Activated CD4-positive, alpha-beta memory T cell treated with anti-CD3 and anti-CD28 coated beads for 36 hours (primary cell): ENCODE measurements at regions of chr5 and their contacts with region 1.

Region 1: DNA sequence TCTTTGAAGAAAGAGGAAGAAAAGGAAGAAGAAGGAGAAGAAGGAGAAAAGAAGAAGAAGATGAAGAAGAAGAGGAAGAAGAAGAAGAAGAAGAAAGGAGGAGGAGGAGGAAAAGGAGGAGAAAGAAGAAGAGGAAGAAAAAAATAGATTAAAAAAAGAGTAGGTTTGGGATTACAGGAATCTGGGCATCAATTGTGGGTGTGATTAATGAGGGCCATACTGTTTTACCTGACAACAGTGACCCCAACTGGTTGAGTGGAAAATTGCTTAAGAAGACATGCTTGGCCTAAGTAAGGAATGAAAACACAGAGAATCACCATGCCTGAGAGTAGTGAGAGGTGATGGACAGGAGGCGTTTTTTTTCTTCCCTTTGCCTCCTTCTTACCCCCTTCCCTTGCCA is 114.6 kb downstream of the FAM170A start:
- DNase-seq: no peak
- H3K4me3 Mint-ChIP-seq: no peak overlapping the region
- H3K27ac Mint-ChIP-seq: no peak overlapping the region
- H3K4me1 Mint-ChIP-seq: no peaks in the 10 kb centered on the region
- H3K27me3 Mint-ChIP-seq: peaks cover 5% of the 10 kb centered on the region

Region 2: DNA sequence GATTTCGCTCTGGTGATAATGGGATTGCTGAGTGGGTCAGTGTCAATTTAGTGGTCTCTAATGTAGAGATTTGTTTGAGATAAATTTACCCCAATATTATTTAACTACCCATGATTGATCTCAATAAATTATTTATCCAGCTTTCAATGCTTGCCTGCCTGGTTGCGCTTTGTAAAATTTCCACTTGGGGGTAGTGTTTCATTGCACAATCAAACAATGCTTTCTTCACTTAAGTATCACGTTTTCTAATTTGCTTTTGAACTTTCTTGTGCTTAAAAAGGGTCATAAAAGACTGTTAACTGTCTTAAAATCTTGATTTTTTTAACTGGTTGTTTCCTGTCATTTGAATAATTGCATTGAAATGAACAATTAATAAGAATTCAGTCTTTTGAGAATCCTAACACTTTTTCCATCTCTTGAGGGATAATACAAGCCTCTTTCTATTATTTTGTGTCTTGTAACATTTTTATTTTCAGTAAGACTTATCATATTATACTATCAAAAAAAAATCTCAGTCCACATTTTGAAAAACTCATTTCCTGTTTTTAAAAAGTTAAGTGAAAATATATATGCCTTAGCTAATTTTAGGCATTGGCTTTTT is 273.0 kb before region 1 on chr5:
- CTCF ChIA-PET with region 1: interaction called, 6 read pairs
- POLR2A ChIA-PET with region 1: no interaction called
- intact Hi-C with region 1: loop called (anchors 1 kb)
- DNase-seq: no peak
- H3K4me3 Mint-ChIP-seq: no peak overlapping the region
- H3K27ac Mint-ChIP-seq: no peak overlapping the region
- H3K4me1 Mint-ChIP-seq: peaks cover 9% of the 10 kb centered on the region
- H3K27me3 Mint-ChIP-seq: no peaks in the 10 kb centered on the region

Region 3: DNA sequence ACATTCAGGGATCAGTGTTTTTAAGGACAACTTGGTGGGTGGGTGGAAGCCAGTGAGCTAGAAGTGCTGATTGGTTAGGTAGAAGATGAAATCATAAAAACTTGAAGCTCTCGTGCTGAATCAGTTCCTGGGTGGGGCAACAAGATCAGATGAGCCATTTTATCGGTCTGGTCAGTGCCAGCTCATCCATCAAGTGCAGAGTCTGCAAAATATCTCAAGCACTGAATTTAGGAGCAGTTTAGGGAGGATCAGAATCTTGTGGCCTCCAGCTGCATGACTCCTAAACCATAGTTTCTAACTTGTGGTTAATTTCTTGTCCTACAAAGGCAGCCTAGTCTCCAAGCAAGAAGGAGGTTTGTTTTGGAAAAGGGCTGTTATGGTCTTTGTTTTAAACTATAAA is 51.8 kb after region 1 on chr5:
- CTCF ChIA-PET with region 1: no interaction called
- POLR2A ChIA-PET with region 1: no interaction called
- intact Hi-C with region 1: no loop called
- DNase-seq: no peak
- H3K4me3 Mint-ChIP-seq: no peak overlapping the region
- H3K27ac Mint-ChIP-seq: no peak overlapping the region
- H3K4me1 Mint-ChIP-seq: no peaks in the 10 kb centered on the region
- H3K27me3 Mint-ChIP-seq: no peaks in the 10 kb centered on the region